GM12878 (cell line): ENCODE measurements at regions of chr9 and their contacts with region 1.

Region 1: GRCh38 chr9:121376214-121376830 is 6.3 kb upstream of the STOM start:
- DNase-seq: no peak
- ATAC-seq: no peak
- H3K4me3 ChIP-seq: no peak overlapping the region
- H3K27ac ChIP-seq: no peak overlapping the region
- H3K4me1 ChIP-seq: no peaks in the 10 kb centered on the region
- H3K27me3 ChIP-seq: no peaks in the 10 kb centered on the region; a peak in 1 of 4 replicates
- CTCF ChIP-seq: peak in 1 of 3 experiments; percentile 9; a peak in 2 of 6 replicates
- EP300 ChIP-seq: no peak
- POLR2A ChIP-seq: no peak
- RAD21 ChIP-seq: peak; percentile 37; the same call in 1 of the 2 replicates

Region 2: DNA sequence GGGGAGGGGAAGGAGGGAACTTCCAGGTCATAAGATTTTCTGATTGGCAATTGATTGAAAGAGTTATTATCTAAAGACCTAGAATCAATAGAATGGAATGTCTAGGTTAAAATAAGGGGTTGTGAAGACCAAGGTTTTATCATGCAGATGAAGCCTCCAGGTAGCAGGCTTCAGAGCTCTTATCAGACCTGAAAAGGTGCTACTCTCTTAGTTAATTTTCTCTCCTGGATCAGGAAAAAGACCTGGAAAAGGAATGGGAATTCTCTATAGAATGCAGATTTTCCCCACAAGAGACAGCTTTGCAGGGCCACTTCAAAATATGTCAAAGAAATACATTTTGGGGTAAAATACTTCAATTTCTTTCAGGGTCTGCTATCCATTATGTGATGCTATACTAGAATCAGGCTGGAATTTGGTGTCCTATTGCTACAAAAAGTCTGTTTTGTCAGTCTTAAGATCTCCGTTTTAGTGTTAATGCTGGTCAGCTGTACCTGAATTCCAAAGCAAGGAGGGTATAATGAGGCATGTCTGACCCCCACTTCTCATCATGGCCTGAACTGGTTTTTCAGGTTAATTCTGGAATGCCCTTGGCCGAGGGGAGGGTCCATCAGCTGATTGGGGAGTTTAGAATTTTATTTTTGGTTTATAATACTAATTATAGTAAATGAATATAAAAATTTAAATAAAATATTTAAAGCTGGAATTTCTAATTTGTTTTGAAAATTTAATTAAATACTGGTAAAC is 10.3 kb after region 1 on chr9:
- CTCF ChIA-PET with region 1: interaction called, 10 read pairs
- POLR2A ChIA-PET with region 1: interaction called, 3 read pairs
- RAD21 ChIA-PET with region 1: interaction called, 4 read pairs
- SMC1A ChIA-PET with region 1: interaction called, 8 read pairs
- in situ Hi-C with region 1: no loop called
- intact Hi-C with region 1: no loop called
- DNase-seq: no peak
- ATAC-seq: no peak
- H3K4me3 ChIP-seq: no peak overlapping the region
- H3K27ac ChIP-seq: no peak overlapping the region
- H3K4me1 ChIP-seq: no peaks in the 10 kb centered on the region
- H3K27me3 ChIP-seq: no peaks in the 10 kb centered on the region
- CTCF ChIP-seq: no peak
- EP300 ChIP-seq: no peak
- POLR2A ChIP-seq: no peak
- RAD21 ChIP-seq: no peak